WTC11 (cell line): ENCODE measurements at regions of chr10 and their contacts with region 1.

Region 1: DNA sequence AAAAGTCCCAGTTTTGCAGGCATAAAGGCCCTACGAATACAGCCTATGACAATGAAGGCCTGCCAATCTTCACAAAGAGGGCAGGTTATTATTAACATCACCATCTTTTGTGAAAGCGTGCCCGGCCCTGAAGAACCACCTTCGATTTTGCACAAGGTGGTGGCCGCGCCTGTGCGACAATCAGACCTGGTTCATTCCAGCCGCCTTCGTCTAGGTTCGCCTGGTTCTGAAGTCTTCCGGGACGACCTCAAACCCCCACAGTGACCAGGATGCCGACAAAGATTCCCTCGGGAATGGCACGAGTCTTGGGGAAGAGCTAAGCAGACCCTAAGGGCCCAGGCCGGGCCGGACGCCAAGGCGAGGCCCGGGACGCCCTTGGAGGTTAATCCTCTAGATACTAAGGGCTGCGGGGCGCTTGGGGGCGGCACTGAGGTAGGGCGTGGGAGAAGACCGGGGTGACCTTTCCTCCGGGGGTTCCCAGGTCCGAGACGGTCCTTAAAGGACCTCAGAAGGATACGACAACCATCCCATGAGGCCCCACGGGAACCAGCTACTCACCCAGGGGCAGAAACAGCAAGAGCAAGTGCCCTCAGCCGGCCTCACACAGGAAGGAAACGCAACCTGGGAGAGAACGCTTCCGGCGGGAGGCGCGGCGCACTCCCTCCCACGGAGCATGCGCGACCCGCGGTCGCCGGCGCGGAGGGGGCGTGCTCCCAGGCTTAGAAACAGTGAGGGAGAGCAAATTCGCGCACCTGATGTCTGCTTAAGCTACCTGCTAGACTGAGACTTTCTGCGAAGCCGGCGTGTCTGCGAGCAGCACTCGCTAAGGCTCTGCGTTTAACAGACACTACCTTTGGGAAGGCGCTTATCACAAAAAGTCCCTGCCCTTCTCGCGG is at the start of gene ATAD1:
- DNase-seq: peak; percentile 80
- ATAC-seq: peak; percentile 92
- H3K4me3 Mint-ChIP-seq: peak within 1 kb of the TSS; percentile 95
- H3K27ac Mint-ChIP-seq: peak within 1 kb of the TSS; percentile 96
- H3K4me1 Mint-ChIP-seq: peaks cover 26% of the 10 kb centered on the region
- H3K27me3 Mint-ChIP-seq: peaks cover 5% of the 10 kb centered on the region; the same call in 1 of the 2 replicates
- CTCF ChIP-seq: no peak
- total RNA-seq, gene ATAD1: 43.7 to 46.7 TPM (median 45.5 TPM) in 3 replicates

Region 2: GRCh38 chr10:87786421-87786820 is 31.4 kb before region 1 on chr10:
- CTCF ChIA-PET with region 1: no interaction called
- POLR2A ChIA-PET with region 1: no interaction called
- DNase-seq: no peak
- ATAC-seq: no peak
- H3K4me3 Mint-ChIP-seq: no peak overlapping the region
- H3K27ac Mint-ChIP-seq: no peak overlapping the region
- H3K4me1 Mint-ChIP-seq: no peaks in the 10 kb centered on the region
- H3K27me3 Mint-ChIP-seq: no peaks in the 10 kb centered on the region
- CTCF ChIP-seq: no peak

Region 3: GRCh38 chr10:87850742-87851205 is 32.9 kb after region 1 on chr10:
- CTCF ChIA-PET with region 1: interaction called, 3 read pairs
- POLR2A ChIA-PET with region 1: interaction called, 15 read pairs
- DNase-seq: peak; percentile 54
- ATAC-seq: peak; percentile 100
- H3K4me3 Mint-ChIP-seq: no peak overlapping the region
- H3K27ac Mint-ChIP-seq: no peak overlapping the region
- H3K4me1 Mint-ChIP-seq: peaks cover 13% of the 10 kb centered on the region
- H3K27me3 Mint-ChIP-seq: no peaks in the 10 kb centered on the region
- CTCF ChIP-seq: no peak